ENCODE measurements at regions of chr12 and their contacts with region 1.

Region 1: GRCh38 chr12:54379401-54380201 is 4.9 kb downstream of the ZNF385A start:
- DNase-seq: peak; percentile 34
- H3K4me3 ChIP-seq: peak overlapping the region; percentile 58
- H3K27ac ChIP-seq: no peak overlapping the region
- H3K27me3 ChIP-seq: no peaks in the 10 kb centered on the region
- CTCF ChIP-seq: peak; percentile 100

Region 2: GRCh38 chr12:53543539-53543938 is 836.1 kb before region 1 on chr12:
- CTCF ChIA-PET with region 1: no interaction called
- POLR2A ChIA-PET with region 1: no interaction called
- DNase-seq: peak; percentile 41
- H3K4me3 ChIP-seq: no peak overlapping the region
- H3K27ac ChIP-seq: peak overlapping the region; percentile 52
- H3K27me3 ChIP-seq: no peaks in the 10 kb centered on the region
- CTCF ChIP-seq: peak; percentile 98

Region 3: DNA sequence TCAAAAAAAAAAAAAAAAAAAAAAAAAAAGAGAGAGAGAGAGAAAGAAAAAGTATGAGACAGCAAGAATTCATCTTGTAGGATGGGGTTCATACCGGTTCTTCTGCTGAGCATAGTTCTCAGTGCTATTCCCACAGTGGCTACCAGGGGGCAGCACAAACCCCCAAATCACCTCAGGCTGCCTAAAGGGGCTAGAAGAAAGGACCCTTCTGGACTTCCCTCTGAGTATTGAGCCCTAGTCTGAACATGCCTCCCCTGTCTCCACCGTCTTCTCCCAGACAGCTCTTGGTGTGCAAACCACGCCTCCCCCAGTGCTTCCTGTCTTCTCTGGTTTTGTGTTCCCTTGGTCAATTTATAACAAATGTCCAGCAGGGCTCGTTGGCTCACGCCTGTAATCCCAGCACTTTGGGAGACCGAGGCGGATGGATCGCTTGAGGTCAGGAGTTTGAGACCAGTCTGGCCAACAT is 159.5 kb before region 1 on chr12:
- CTCF ChIA-PET with region 1: interaction called, 82 read pairs
- POLR2A ChIA-PET with region 1: no interaction called
- DNase-seq: peak; percentile 53
- H3K4me3 ChIP-seq: no peak overlapping the region
- H3K27ac ChIP-seq: no peak overlapping the region
- H3K27me3 ChIP-seq: no peaks in the 10 kb centered on the region
- CTCF ChIP-seq: peak; percentile 88

Region 4: DNA sequence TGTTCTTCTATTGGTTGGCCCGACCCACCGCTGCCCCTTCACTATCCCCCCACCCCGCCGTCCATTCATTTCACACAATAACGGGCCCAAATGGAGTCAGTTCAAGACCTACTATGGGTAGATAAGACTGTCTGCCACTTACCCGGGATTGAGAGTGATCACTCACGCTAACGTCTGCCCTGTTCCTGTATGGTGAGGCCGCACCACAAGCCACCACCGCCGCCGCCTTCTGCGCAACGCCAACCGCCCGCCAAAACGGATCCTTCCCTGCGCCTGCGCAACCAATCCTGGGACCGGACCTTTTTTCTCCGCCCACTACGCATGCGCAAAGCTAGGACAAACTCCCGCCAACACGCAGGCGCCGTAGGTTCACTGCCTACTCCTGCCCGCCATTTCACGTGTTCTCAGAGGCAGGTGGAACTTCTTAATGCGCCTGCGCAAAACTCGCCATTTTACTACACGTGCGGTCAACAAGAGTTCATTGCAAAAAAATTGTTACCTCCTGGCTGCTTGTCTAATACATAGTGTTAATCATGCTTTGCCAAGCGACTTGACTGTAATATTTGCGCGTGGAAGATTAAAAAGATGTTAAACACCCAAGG is 99.6 kb before region 1 on chr12 and contains the start of gene CBX5:
- CTCF ChIA-PET with region 1: interaction called, 22 read pairs
- POLR2A ChIA-PET with region 1: interaction called, 4 read pairs
- DNase-seq: peak; percentile 99
- H3K4me3 ChIP-seq: peak within 1 kb of the TSS; percentile 93
- H3K27ac ChIP-seq: peak within 1 kb of the TSS; percentile 87
- H3K27me3 ChIP-seq: no peaks in the 10 kb centered on the region
- CTCF ChIP-seq: no peak
- polyA plus RNA-seq, gene CBX5: 49.0 and 62.3 TPM in 2 replicates

Region 5: GRCh38 chr12:54324617-54325441 is 54.8 kb before region 1 on chr12 and contains the start of gene COPZ1:
- CTCF ChIA-PET with region 1: interaction called, 17 read pairs
- POLR2A ChIA-PET with region 1: no interaction called
- DNase-seq: peak; percentile 99
- H3K4me3 ChIP-seq: peak within 1 kb of the TSS; percentile 75
- H3K27ac ChIP-seq: peak within 1 kb of the TSS; percentile 88
- H3K27me3 ChIP-seq: no peaks in the 10 kb centered on the region
- CTCF ChIP-seq: peak; percentile 83
- polyA plus RNA-seq, gene COPZ1: 355 and 404 TPM in 2 replicates

Region 6: DNA sequence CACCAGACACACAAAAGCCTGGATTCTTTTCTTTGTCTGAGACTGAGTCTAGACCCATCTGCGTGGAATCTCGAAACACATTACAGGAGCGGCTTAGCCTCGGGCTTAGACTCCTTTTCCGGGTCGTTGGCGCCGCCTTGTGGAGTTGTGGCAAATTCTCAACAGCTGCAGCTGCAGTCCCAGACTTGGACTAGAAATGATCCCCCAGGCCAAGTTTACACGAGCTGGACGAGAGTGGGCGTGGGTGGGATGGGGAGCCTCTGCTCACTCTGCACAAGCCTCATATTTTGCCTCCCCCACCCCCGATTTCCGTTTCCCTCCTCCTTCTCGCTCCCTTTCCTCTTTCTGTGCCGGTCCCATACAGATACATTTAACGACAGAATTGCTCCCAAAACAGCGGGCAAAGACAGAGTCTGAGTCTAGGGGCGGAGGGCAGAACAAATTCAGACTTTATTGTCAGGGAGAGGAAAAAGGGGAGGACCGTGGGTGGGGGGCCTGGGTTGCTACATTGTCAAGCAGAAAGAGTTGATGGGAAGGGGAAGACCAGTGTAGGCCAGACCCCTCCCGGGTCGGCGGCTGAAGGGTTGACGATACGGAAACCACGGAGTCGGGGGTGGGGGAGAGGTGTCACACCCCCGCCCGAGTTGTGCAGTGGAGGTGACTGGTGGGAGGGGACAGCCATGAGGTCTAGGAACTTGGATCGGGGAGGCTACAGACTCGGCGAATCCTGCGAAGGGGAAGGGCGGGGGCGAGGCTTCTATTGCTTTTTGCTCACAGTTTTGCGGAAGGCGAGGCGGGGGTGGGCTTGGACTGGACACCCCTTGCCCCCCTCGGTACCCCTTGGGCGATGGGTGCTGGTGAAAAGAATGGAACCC is 10.7 kb before region 1 on chr12:
- CTCF ChIA-PET with region 1: interaction called, 98 read pairs
- POLR2A ChIA-PET with region 1: interaction called, 4 read pairs
- DNase-seq: peak; percentile 85
- H3K4me3 ChIP-seq: peak overlapping the region; percentile 27; the same call in 1 of the 2 replicates
- H3K27ac ChIP-seq: peak overlapping the region; percentile 24
- H3K27me3 ChIP-seq: no peaks in the 10 kb centered on the region
- CTCF ChIP-seq: peak; percentile 94

Region 7: DNA sequence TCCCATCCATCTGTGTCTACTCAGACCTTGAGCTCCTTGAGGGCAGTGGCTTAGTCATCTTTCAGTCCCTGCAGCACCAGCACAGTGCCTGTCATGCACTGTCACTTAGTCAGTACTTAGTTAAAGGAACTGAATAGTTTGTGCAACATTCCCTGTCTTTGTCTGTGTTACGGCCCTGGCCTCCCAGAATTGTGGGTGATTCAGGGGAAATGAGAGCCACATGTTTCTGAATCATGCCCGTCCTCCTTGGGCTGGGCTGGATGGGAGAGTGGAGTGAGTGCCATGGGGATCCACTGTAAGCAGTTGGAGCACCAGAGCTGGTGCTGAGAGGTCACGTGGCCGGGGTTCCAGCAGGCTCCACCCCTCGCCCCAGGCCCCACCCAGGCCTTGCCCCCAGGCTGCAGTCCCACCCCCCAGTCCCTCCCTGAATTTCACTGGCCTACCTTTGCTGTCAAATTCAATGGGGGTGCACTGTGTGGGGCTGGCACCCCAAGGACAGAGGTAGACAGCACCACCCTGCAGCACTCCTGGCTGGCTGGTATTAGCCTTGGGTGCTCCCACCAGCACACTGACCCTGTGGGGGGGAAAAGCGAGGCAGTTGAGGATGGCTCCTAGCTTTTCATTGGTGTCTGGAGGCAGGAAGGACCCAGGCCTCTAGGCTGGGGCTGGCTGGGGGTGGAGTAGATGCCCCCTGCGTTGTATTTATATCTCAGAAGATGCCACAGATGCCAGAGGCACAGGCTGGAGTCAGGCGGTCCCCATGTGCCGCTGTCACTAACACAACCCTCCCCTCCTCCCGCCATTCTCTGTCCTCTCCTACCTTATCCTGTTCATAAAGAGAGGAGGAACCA is 32.0 kb after region 1 on chr12:
- CTCF ChIA-PET with region 1: interaction called, 23 read pairs
- POLR2A ChIA-PET with region 1: no interaction called
- DNase-seq: peak; percentile 71
- H3K4me3 ChIP-seq: no peak overlapping the region
- H3K27ac ChIP-seq: peak overlapping the region; percentile 86
- H3K27me3 ChIP-seq: no peaks in the 10 kb centered on the region
- CTCF ChIP-seq: no peak

Region 8: GRCh38 chr12:54439521-54440255 is 60.1 kb after region 1 on chr12:
- CTCF ChIA-PET with region 1: interaction called, 85 read pairs
- POLR2A ChIA-PET with region 1: no interaction called
- DNase-seq: peak; percentile 60
- H3K4me3 ChIP-seq: no peak overlapping the region
- H3K27ac ChIP-seq: no peak overlapping the region
- H3K27me3 ChIP-seq: peaks cover 8% of the 10 kb centered on the region
- CTCF ChIP-seq: peak; percentile 87

Measured in AG04450 (cell line).